ENCODE measurements at regions of chr1 and their contacts with region 1.

Region 1: GRCh38 chr1:213982672-213983492 is 4.9 kb upstream of the PROX1 start:
- DNase-seq: no peak
- ATAC-seq: peak; percentile 26

Region 2: GRCh38 chr1:213374369-213374768 is 608.5 kb before region 1 on chr1:
- intact Hi-C with region 1: loop called (anchors 2 kb)
- DNase-seq: no peak
- ATAC-seq: peak; percentile 71

Measured in Right ventricle myocardium inferior (tissue), 1 donor.